Activated CD8-positive, alpha-beta T cell treated with anti-CD3 and anti-CD28 coated beads, Interleukin-2, amount 10 ng/mL, durations not matched to agents 7 days and 5 days (primary cell): ENCODE measurements at regions of chr2 and their contacts with region 1.

Region 1: DNA sequence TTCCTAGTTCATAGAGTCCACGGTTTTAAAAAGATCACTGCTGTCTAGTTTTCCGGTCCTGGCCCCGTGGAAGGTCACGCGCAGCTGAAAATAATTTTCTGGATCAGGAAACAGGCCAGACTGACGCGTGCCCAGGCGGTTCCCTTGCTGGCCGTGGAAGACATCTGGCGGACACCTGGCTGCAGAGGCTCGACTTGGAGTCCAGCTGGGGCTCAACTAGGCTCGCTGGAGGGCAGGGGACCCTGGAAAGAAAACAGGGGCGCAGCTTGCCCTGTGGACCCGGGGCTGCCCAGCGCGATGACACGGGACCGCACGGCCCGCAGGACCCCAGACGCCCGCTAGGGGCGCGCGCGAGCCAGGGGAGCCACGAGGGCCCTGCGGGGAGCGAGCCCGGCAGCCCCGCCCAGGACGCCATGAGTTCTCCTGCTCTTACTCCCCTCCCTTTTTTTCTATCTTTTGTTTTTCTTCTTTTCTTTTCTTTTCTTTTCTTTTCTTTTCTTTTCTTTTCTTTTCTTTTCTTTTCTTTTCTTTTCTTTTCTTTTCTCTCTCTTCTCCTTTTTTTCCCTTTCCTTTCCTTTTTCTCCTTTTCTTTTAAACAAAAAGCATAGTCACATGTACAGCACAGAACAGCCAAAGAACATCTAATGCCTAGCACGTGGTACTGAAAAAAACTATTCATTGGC is 43.2 kb upstream of the UBE2F start:
- DNase-seq: peak; percentile 84
- ATAC-seq: peak; percentile 99
- H3K4me3 Mint-ChIP-seq: peak overlapping the region; percentile 18
- H3K27ac Mint-ChIP-seq: peak overlapping the region; percentile 44
- H3K4me1 Mint-ChIP-seq: peaks cover 41% of the 10 kb centered on the region
- H3K27me3 Mint-ChIP-seq: no peaks in the 10 kb centered on the region

Region 2: GRCh38 chr2:237858294-237859081 is 65.1 kb before region 1 on chr2:
- CTCF ChIA-PET with region 1: interaction called, 10 read pairs
- POLR2A ChIA-PET with region 1: no interaction called
- DNase-seq: peak; percentile 71
- ATAC-seq: peak; percentile 86
- H3K4me3 Mint-ChIP-seq: peak overlapping the region; percentile 64
- H3K27ac Mint-ChIP-seq: no peak overlapping the region
- H3K4me1 Mint-ChIP-seq: peaks cover 20% of the 10 kb centered on the region
- H3K27me3 Mint-ChIP-seq: peaks cover 56% of the 10 kb centered on the region

Region 3: DNA sequence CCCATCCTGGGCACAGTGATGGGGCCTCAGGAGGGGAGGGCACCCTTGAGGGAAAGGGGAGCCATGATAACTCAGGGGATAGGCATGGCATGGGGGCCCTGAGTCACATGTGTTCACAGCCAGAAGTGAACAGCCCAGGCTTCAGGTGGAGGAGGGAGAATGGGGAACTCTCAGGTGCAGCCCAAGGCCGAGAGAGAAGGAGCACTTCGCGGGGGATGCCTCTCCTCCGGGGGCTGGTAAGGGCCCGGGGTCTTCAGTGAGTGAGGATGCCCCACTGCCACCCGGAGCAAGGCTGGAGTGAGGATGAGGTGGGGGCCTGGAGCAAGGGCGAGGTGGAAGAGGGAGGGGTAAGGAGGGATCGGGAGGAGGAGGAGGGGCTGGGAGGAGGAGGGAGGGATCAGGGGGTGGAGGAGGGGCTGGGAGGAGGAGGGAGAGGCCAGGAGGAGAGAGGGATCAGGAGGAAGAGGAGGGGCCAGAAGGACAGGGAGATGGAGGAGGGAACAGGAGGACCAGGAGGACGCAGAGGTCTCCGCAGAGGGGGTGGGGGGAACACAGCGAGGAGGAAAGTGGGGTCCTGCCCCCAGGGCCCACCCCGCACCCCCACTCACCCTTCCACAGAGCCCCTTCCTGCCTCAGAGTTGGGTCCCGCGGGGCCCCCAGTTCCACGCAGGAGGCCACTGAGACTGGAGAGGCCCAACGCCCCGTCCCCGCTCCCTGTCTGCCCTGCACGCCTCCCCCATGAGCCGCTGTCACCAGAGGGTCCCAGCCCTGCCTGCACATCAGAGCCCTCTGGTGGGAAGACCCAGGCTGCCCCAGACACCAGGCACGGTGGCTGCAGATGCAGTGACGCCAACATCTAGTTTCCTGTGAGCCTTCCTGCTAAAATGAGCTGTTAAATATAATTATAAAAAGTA is 21.4 kb before region 1 on chr2:
- CTCF ChIA-PET with region 1: interaction called, 10 read pairs
- POLR2A ChIA-PET with region 1: no interaction called
- DNase-seq: peak; percentile 62
- ATAC-seq: no peak
- H3K4me3 Mint-ChIP-seq: no peak overlapping the region
- H3K27ac Mint-ChIP-seq: peak overlapping the region; percentile 93
- H3K4me1 Mint-ChIP-seq: peaks cover 86% of the 10 kb centered on the region
- H3K27me3 Mint-ChIP-seq: no peaks in the 10 kb centered on the region

Region 4: GRCh38 chr2:237943395-237944094 is 19.9 kb after region 1 on chr2:
- CTCF ChIA-PET with region 1: interaction called, 12 read pairs
- POLR2A ChIA-PET with region 1: no interaction called
- DNase-seq: no peak
- ATAC-seq: no peak
- H3K4me3 Mint-ChIP-seq: no peak overlapping the region
- H3K27ac Mint-ChIP-seq: peak overlapping the region; percentile 54
- H3K4me1 Mint-ChIP-seq: peaks cover 59% of the 10 kb centered on the region
- H3K27me3 Mint-ChIP-seq: no peaks in the 10 kb centered on the region